MCF 10A (cell line): ENCODE measurements at regions of chr13 and their contacts with region 1.

Region 1: DNA sequence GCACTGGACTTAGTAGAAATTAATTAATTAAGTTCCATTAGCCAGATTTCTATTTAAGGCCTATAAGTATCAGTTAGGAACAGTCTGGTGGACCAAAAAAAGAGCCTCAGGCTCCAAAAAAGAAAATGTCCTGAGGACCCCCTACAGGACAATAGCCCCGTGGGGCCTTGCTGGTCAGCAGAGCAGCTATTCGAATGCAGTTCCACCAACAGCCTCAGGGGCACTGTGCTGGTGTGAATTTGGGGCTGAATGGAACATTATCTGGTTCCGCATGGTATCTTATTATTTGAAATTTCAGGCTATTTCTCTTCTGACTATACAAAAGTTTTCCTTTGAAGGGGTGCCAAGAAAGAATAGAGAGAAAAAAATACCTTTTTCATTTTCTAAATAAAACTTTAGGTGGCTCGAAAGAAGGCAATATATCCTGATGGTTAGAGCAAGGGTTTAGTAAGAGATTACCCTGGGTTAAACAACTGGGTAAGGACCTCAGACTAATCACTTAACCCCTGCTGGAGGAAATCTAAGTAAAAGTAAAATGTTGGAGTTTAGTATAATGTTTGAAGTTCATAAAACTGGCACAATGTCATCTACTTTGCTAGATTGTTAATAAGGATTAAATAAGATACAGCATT is 147.2 kb downstream of the MIPEP start:
- DNase-seq: peak; percentile 13
- H3K4me3 Mint-ChIP-seq: no peak overlapping the region
- H3K27ac Mint-ChIP-seq: no peak overlapping the region
- H3K4me1 Mint-ChIP-seq: peaks cover 9% of the 10 kb centered on the region
- H3K27me3 Mint-ChIP-seq: no peaks in the 10 kb centered on the region
- CTCF ChIP-seq: peak; percentile 30

Region 2: DNA sequence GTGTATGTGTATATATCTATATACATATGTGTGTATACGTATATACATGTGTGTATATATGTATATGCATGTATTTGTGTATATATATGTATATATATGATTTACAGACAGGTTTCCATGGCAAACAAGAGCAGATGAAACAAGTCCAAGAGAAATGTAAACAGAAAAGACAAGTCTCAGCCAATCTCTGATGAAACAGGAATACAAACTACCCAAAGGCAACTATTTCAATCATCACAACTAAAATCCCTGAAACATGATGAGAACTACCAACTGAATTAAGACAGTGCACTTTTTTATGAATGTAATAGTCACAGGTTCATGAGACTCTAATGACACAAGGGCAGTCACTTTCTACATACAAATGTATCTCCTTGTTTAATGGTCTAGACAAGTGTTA is 31.6 kb before region 1 on chr13:
- CTCF ChIA-PET with region 1: no interaction called
- POLR2A ChIA-PET with region 1: no interaction called
- intact Hi-C with region 1: no loop called
- DNase-seq: no peak
- H3K4me3 Mint-ChIP-seq: no peak overlapping the region
- H3K27ac Mint-ChIP-seq: no peak overlapping the region
- H3K4me1 Mint-ChIP-seq: no peaks in the 10 kb centered on the region
- H3K27me3 Mint-ChIP-seq: peaks cover 21% of the 10 kb centered on the region
- CTCF ChIP-seq: no peak

Region 3: DNA sequence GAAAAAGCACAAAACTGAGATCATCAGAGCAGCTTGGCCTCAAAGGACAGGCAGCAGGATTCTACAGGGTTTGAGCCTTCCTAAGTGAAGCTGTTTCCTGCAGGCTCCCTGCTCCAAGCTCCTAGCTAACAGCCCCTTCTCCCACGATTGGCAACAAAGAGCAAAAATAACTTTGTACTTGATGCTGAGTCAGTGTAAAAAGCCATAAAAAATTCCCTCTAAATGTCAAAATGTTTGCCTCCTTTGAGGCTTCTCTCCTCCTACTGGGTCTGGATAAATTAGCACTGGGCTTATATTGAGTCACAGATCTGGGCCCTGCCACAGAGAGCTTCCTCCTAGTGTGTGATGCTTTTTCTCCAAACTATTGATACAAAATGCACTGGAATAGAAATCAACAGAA is 18.5 kb before region 1 on chr13:
- CTCF ChIA-PET with region 1: no interaction called
- POLR2A ChIA-PET with region 1: no interaction called
- intact Hi-C with region 1: no loop called
- DNase-seq: no peak
- H3K4me3 Mint-ChIP-seq: no peak overlapping the region
- H3K27ac Mint-ChIP-seq: no peak overlapping the region
- H3K4me1 Mint-ChIP-seq: no peaks in the 10 kb centered on the region
- H3K27me3 Mint-ChIP-seq: no peaks in the 10 kb centered on the region
- CTCF ChIP-seq: no peak

Region 4: GRCh38 chr13:23851106-23851505 is 109.1 kb after region 1 on chr13:
- CTCF ChIA-PET with region 1: no interaction called
- POLR2A ChIA-PET with region 1: no interaction called
- intact Hi-C with region 1: no loop called
- DNase-seq: peak; percentile 35
- H3K4me3 Mint-ChIP-seq: no peak overlapping the region
- H3K27ac Mint-ChIP-seq: no peak overlapping the region
- H3K4me1 Mint-ChIP-seq: peaks cover 5% of the 10 kb centered on the region
- H3K27me3 Mint-ChIP-seq: no peaks in the 10 kb centered on the region
- CTCF ChIP-seq: no peak

Region 5: DNA sequence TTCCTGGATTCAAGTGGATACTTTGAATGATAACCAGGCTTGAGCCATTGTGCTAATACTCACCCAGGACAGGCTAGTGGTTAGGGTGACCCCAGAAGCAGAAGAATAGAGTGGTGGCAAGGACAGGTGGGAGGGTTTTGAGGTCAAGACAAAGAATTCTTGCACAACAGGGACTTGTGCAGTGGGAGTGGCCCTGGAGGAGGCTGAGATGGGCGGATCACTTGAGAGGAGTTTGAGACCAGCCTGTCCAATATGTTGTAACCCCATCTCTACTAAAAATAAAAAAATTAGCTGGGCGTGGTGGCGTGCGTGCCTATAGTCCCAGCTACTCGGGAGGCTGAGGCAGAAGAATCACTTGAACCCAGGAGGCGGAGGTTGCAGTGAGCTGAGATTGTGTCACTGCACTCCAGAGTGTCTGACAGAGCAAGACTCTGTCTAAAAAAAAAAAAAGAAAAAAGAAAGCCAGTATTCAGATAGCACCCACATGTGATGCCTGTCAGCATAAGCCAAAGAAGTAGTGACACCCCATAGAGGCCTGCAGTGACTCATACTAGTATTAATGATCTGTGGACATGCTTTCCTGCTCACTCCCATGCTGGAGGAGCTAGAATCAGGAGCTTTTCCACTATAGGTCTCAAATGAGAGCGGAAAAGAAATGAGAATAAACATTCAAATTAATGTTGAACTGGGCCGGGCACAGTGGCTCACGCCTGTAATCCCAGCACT is 1100.7 kb after region 1 on chr13:
- CTCF ChIA-PET with region 1: no interaction called
- POLR2A ChIA-PET with region 1: no interaction called
- intact Hi-C with region 1: loop called (anchors 10 kb)
- DNase-seq: peak; percentile 71
- H3K4me3 Mint-ChIP-seq: no peak overlapping the region
- H3K27ac Mint-ChIP-seq: peak overlapping the region; percentile 52
- H3K4me1 Mint-ChIP-seq: peaks cover 18% of the 10 kb centered on the region
- H3K27me3 Mint-ChIP-seq: no peaks in the 10 kb centered on the region
- CTCF ChIP-seq: no peak